ENCODE measurements at regions of chr6 and their contacts with region 1.

Region 1: DNA sequence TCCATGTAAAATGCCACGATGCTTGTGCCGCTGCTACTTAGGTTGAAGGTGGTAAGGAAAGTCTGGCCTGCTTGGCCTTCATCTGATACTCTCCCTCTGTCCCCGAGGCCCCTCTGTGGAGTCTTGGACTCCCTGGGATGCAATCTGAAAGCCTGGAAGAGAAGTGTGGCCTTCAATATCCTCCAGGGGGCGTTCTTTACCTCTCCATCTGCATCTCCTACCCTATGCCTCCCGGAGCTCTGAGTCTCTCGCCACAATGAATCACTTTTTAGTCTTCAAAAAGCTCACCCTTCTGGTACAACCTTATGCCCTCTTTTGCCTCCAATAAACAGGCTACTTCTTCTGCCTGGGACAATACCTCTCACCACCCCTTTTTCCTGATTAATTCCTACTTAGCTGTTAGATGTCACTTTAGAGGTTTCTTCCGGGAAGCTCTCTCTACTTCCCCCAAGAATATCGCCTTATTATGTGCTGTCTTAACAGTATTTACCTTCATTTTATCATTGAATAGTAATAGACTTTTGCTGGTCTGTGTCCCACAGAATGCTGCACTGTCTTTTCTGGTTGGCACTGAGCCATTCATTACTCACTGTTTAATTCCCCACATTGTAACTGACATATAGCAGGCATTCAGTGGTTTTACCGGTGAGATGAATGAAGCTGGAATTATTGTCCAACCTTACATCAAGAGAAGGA is 13.9 kb upstream of the ATG5 start:
- DNase-seq: peak; percentile 83

Region 2: DNA sequence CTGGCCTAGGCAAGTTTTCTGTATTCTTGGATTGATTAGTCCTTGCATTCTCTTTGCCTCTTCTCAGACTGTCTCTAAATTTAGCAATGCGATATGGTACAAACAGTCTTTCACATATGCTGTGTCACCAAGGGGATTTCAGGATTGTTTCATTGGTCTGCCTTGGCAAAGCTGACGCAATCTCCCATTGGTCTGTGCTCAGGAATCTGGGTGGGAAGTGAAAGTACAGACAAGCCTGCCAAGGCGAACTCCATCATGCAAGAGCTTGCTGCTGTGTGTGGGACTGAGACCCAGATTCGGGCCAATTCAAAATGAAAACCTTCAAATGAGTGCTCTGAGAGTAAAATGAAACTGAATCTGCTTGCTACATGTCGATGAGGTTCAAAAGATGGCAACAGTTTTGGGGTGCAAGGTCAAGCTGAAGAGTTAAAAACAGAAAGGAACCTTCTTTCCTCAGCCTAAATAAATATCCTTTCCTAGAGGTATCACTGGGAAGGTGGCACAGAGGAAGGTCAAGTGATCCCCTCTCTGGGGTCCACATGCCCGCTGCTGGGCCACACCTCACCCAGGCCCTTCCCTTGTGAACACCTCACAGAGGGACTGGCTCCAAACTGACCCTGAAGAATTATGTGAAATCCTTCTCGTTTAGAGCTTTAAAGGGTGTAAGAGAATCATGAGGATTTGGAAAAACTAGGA is 737.8 kb before region 1 on chr6:
- CTCF ChIA-PET with region 1: interaction called, 11 read pairs
- POLR2A ChIA-PET with region 1: no interaction called
- DNase-seq: no peak

Region 3: GRCh38 chr6:106568530-106568929 is 229.0 kb after region 1 on chr6:
- CTCF ChIA-PET with region 1: interaction called, 25 read pairs
- POLR2A ChIA-PET with region 1: no interaction called
- DNase-seq: no peak